Colonic mucosa (tissue), 4 donors: ENCODE measurements at regions of chr9 and their contacts with region 1.

Region 1: GRCh38 chr9:32579706-32580331 is 6.9 kb upstream of the NDUFB6 start:
- DNase-seq: peak; percentile 75
- H3K4me3 ChIP-seq: no peak overlapping the region
- H3K27ac ChIP-seq: no peak overlapping the region
- H3K4me1 ChIP-seq: no peaks in the 10 kb centered on the region
- H3K27me3 ChIP-seq: no peaks in the 10 kb centered on the region
- CTCF ChIP-seq: peak; percentile 89

Region 2: GRCh38 chr9:32968101-32969011 is 388.5 kb after region 1 on chr9:
- intact Hi-C with region 1: loop called (anchors 2 kb)
- DNase-seq: peak; percentile 63
- H3K4me3 ChIP-seq: no peak overlapping the region
- H3K27ac ChIP-seq: no peak overlapping the region
- H3K4me1 ChIP-seq: no peaks in the 10 kb centered on the region
- H3K27me3 ChIP-seq: no peaks in the 10 kb centered on the region
- CTCF ChIP-seq: peak; percentile 88